HEK293 (cell line): ENCODE measurements at regions of chr1 and their contacts with region 1.

Region 1: GRCh38 chr1:204806943-204807687 is 63.5 kb upstream of the NFASC start:
- H3K4me3 ChIP-seq: peak overlapping the region; percentile 62
- H3K27ac ChIP-seq: no peak overlapping the region
- H3K4me1 ChIP-seq: no peaks in the 10 kb centered on the region
- CTCF ChIP-seq: peak; percentile 99

Region 2: DNA sequence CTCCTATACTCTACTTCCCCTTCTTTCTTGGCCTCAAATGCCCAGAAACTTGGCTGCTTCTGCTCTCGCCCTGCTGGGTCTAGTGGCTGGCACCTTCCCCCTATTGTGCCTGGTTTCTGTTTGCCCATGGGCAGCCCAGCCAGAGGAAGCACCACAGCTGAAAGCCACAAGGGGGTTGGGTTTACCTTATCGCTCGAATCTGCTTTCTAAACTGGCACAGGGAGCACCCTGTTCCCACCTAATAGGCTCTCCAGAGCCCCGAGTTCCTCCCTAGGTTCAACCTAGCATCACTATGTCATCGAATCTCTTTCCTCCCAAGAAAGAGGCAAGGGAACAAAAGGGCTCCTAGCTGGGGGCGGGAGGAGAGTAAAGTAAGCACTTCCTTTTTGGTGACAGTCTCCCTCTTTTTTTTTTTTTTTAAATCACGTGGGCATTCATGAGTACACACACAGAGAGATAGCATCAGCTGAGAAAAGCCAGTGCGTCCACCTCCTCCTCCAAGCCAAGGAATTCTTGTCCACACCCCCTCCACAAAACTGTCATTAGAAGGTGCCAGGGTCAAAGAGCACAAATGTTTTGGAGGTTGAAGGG is 520.2 kb before region 1 on chr1:
- CTCF ChIA-PET with region 1: no interaction called
- POLR2A ChIA-PET with region 1: no interaction called
- H3K4me3 ChIP-seq: no peak overlapping the region
- H3K27ac ChIP-seq: no peak overlapping the region
- H3K4me1 ChIP-seq: peaks cover 12% of the 10 kb centered on the region
- CTCF ChIP-seq: no peak

Region 3: GRCh38 chr1:204431310-204432165 is 375.6 kb before region 1 on chr1:
- CTCF ChIA-PET with region 1: interaction called, 11 read pairs
- POLR2A ChIA-PET with region 1: no interaction called
- H3K4me3 ChIP-seq: no peak overlapping the region
- H3K27ac ChIP-seq: no peak overlapping the region
- H3K4me1 ChIP-seq: no peaks in the 10 kb centered on the region
- CTCF ChIP-seq: peak; percentile 50; the same call in 1 of the 2 replicates

Region 4: DNA sequence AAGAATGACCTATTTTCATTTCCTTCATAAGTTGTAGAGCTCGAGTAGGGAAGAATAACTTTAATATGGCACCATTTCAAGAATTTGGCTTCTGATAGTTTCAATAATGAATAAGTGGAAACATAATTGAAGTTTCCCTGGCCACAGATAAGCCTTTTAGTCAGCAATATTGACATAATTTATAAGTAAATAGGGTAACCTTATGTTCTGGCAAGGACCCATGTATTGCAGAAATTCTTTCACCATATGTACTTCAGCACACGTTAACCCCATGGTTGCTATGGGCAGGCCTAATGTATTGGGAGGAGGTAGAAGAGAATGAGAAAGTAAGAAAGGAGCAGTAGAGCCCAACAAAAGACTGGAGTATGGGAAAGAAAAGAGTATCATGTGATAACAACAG is 265.5 kb before region 1 on chr1:
- CTCF ChIA-PET with region 1: interaction called, 10 read pairs
- POLR2A ChIA-PET with region 1: no interaction called
- H3K4me3 ChIP-seq: no peak overlapping the region
- H3K27ac ChIP-seq: no peak overlapping the region
- H3K4me1 ChIP-seq: no peaks in the 10 kb centered on the region
- CTCF ChIP-seq: no peak

Region 5: DNA sequence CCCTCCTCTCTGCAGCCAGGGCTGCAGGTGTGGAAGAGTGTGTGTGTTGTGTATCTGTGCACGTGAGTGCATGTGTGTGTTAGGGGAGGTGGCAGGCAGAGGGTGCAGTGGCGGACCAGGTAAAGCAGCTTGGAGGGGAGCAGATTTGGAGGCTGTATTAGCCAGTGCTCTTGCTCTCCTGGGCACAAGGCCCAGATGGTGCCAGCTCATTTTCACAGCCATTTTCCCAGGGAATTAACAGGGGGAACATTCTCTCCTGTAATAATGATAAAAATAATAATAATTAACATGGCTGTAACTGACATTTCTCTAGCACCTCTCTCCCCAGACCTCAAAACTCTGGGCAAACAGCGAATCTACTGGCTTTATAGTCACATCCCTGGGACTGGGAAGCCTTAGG is 165.2 kb before region 1 on chr1:
- CTCF ChIA-PET with region 1: interaction called, 18 read pairs
- POLR2A ChIA-PET with region 1: no interaction called
- H3K4me3 ChIP-seq: no peak overlapping the region
- H3K27ac ChIP-seq: no peak overlapping the region
- H3K4me1 ChIP-seq: no peaks in the 10 kb centered on the region
- CTCF ChIP-seq: no peak

Region 6: DNA sequence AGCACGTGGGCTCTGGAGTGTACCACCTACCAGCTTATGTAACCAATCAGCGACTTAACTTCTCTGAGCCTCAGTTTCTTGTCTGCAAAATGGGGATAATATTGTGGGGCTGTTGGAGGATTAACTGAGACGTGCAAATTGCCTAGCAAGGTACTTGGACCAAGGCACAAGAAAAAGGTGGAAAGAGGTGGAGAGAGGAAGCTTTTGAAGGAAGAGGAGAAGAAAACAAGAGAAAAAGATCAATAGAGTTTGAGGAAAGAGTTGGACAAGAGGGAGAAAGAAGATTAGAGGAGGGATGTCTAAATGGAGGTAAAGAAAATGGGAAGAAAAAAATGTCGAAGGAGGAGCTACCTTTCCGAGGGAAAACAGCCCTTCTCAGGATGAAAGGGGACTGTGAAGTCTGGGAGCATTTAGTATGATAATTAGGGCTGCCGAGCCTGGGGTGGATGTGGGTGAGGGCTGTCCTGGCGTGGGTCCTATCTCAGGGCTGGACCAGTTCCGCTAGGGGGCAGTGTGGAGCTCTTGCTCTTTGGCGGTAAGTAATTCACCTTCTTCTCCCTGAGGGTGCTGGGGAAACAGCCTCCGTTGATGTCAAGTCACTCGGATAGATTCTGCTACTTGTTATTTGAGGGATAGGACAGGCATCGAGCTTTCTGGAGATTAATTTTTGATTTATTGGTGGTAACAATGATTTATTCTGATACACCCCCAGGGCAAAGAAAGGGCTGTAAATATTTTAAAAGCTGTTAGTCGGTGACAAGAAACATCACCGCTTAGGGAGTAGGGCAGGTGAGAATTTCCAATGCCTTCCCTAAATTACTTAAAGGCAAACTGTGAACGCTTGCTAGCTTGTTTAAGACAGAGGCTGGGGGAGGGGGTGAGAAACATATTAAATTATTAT is 15.4 kb before region 1 on chr1:
- CTCF ChIA-PET with region 1: interaction called, 106 read pairs
- POLR2A ChIA-PET with region 1: no interaction called
- H3K4me3 ChIP-seq: no peak overlapping the region
- H3K27ac ChIP-seq: no peak overlapping the region
- H3K4me1 ChIP-seq: no peaks in the 10 kb centered on the region
- CTCF ChIP-seq: peak; percentile 42; the same call in 1 of the 2 replicates

Region 7: DNA sequence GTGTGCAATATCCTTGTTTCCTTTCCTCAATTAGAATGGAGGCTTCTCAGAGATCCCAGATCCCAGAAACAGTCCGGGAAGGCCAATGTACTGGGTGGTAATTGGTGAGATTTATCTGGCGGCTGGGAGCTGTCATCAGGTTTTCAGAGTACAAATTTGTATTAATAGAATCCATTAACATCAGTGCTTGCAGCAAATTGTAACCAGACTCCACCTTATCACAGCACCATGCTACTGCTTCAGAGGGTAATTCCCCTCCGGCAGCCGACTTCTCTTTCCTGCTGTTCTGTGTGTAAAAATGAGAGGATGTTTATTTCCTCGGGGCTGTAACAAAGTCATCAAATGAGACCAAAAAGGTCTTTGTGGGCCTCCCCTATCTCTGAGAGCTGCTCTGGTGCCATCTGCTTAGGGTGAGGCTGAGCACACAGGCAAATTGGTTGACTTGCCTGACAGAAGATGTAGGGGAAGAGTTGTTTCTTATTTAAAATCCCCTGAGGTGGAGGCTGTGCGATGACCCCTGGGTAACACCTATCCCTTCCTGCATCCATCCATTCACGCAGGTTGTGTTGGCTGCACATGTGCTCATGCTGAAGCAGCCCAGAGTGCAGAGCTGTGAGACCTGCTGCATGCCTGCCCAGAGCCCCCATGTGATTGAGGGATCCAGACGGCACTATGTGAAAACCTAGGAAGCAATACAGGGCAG is 82.7 kb after region 1 on chr1:
- CTCF ChIA-PET with region 1: interaction called, 13 read pairs
- POLR2A ChIA-PET with region 1: no interaction called
- H3K4me3 ChIP-seq: no peak overlapping the region
- H3K27ac ChIP-seq: peak overlapping the region; percentile 20; the same call in 1 of the 2 replicates
- H3K4me1 ChIP-seq: peaks cover 10% of the 10 kb centered on the region
- CTCF ChIP-seq: no peak

Region 8: DNA sequence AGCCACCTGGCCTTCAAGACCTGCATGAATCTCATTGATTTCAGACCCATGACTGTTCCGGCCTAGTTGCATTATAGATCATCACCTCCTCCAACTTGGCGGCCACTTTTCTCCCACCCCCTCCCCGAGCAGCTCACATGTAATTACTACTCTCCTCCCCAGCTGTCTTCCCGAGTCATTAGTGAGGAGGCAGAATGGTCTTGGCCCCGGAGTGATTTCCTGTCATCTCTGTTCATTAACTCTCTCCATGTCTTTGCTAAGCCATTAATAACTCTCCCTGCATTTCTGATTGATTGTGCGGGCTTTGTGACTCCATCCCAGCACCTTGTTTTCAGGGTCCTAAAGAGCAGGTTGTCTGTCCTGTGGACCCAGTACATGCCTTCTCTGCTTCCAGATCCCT is 160.3 kb after region 1 on chr1:
- CTCF ChIA-PET with region 1: interaction called, 17 read pairs
- POLR2A ChIA-PET with region 1: no interaction called
- H3K4me3 ChIP-seq: no peak overlapping the region
- H3K27ac ChIP-seq: no peak overlapping the region
- H3K4me1 ChIP-seq: no peaks in the 10 kb centered on the region
- CTCF ChIP-seq: no peak

Region 9: GRCh38 chr1:205020466-205020865 is 213.4 kb after region 1 on chr1:
- CTCF ChIA-PET with region 1: no interaction called
- POLR2A ChIA-PET with region 1: no interaction called
- H3K4me3 ChIP-seq: no peak overlapping the region
- H3K27ac ChIP-seq: no peak overlapping the region
- H3K4me1 ChIP-seq: no peaks in the 10 kb centered on the region
- CTCF ChIP-seq: no peak